ENCODE measurements at regions of chr11 and their contacts with region 1.

Region 1: GRCh38 chr11:125404776-125405435 is 91.2 kb downstream of the FEZ1 start:
- DNase-seq: peak; percentile 46
- ATAC-seq: peak; percentile 92
- H3K4me3 ChIP-seq: no peak overlapping the region
- H3K27ac ChIP-seq: no peak overlapping the region
- H3K4me1 ChIP-seq: 0 out of 2 replicates have a peak, but pooled peaks cover 5% of the 10 kb centered on the region
- H3K27me3 ChIP-seq: peaks cover 58% of the 10 kb centered on the region
- CTCF ChIP-seq: peak; percentile 100

Region 2: DNA sequence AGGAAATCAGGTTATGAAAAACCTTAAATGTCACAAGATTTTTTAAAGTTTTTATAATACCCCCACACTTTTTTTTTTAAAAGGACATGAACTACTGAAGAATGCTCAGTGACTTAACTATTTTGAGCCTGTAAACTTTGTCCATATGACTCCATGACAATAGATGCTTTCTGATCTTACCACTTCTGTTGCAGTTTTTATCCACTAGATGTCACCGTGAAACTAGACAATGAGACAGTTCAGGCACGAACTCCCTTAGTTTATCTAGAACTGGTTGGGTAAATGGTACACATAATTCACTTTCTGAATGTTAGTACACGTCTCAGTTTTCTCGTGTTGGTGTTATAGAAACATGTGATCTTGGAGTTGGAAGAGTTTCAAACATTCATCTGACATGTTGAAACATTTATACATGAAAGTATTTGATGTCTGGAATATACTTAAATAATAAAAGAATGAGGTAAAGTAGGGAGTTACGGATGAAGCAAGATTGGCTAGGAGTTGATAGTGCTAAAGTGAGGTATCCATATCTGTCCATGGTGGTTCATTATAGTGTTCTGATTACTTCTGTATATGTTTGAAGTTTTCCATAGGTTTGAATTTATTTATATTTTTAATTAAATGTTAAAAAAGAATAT is 442.8 kb before region 1 on chr11:
- CTCF ChIA-PET with region 1: no interaction called
- POLR2A ChIA-PET with region 1: no interaction called
- in situ Hi-C with region 1: no loop called
- intact Hi-C with region 1: loop called (anchors 10 kb)
- DNase-seq: peak; percentile 78
- ATAC-seq: peak; percentile 99
- H3K4me3 ChIP-seq: no peak overlapping the region
- H3K27ac ChIP-seq: no peak overlapping the region
- H3K4me1 ChIP-seq: no peaks in the 10 kb centered on the region
- H3K27me3 ChIP-seq: no peaks in the 10 kb centered on the region
- CTCF ChIP-seq: peak; percentile 77; the same call in 1 of the 2 replicates

Region 3: GRCh38 chr11:125091247-125091876 is 313.5 kb before region 1 on chr11:
- CTCF ChIA-PET with region 1: interaction called, 7 read pairs
- POLR2A ChIA-PET with region 1: no interaction called
- in situ Hi-C with region 1: no loop called
- intact Hi-C with region 1: loop called (anchors 5 kb)
- DNase-seq: peak; percentile 36
- ATAC-seq: peak; percentile 91
- H3K4me3 ChIP-seq: no peak overlapping the region
- H3K27ac ChIP-seq: no peak overlapping the region
- H3K4me1 ChIP-seq: no peaks in the 10 kb centered on the region
- H3K27me3 ChIP-seq: no peaks in the 10 kb centered on the region
- CTCF ChIP-seq: peak; percentile 85

Region 4: DNA sequence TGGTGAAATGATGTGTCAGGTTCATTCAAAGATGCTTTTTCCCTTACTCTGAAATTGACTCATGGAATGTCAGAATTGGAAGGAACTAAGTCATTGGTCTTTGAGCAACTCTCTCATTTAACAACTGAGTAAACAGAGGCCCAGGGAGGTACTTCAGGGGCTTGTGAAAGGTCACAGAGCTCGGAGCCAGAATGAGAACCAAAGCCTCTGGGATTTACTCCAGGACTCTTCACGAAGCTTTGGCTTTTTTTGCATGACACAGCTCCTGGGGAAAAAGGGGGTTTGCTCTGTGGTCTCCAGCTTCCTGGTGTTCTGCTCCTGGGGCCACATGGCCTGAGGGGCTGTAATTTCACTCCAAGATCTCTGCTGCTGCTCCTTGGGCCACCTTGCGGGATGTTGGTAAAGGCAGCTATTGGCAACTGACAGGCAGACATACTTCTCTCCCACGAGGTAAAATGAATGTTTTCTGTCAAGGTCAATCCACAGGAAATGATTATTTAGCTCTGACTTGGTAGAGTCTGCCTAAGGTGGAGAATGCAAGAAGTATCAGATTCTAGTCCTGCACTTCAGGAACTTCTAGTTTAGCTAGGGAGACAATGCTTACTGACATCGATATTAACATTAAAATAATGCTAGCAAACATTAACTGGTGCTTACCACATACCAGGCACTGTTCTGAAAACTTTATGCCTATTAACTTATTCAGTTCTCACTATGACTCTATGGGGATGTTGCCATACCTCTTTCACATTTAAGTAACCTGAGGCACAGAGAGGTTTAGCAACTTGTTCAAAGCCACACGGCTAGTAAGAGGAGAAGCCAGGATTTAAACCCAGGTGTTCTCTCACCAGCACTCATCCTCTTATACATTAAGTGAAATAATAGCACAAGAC is 224.2 kb before region 1 on chr11:
- CTCF ChIA-PET with region 1: interaction called, 10 read pairs
- POLR2A ChIA-PET with region 1: no interaction called
- in situ Hi-C with region 1: no loop called
- intact Hi-C with region 1: no loop called
- DNase-seq: no peak
- ATAC-seq: no peak
- H3K4me3 ChIP-seq: no peak overlapping the region
- H3K27ac ChIP-seq: no peak overlapping the region
- H3K4me1 ChIP-seq: no peaks in the 10 kb centered on the region
- H3K27me3 ChIP-seq: peaks cover 28% of the 10 kb centered on the region
- CTCF ChIP-seq: no peak

Measured in Panc1 (cell line).